ENCODE measurements at regions of chr13 and their contacts with region 1.

Region 1: GRCh38 chr13:41652727-41653361 is 195.5 kb downstream of the RGCC start:
- DNase-seq: peak in 1 of 2 donors; percentile 43
- H3K4me3 ChIP-seq: no peak overlapping the region
- H3K27ac ChIP-seq: peak overlapping the region in 1 of 2 donors; percentile 29
- H3K4me1 ChIP-seq: no peaks in the 10 kb centered on the region
- H3K27me3 ChIP-seq: no peaks in the 10 kb centered on the region
- CTCF ChIP-seq: peak; percentile 70 to 81 (median 74)
- POLR2A ChIP-seq: no peak

Region 2: DNA sequence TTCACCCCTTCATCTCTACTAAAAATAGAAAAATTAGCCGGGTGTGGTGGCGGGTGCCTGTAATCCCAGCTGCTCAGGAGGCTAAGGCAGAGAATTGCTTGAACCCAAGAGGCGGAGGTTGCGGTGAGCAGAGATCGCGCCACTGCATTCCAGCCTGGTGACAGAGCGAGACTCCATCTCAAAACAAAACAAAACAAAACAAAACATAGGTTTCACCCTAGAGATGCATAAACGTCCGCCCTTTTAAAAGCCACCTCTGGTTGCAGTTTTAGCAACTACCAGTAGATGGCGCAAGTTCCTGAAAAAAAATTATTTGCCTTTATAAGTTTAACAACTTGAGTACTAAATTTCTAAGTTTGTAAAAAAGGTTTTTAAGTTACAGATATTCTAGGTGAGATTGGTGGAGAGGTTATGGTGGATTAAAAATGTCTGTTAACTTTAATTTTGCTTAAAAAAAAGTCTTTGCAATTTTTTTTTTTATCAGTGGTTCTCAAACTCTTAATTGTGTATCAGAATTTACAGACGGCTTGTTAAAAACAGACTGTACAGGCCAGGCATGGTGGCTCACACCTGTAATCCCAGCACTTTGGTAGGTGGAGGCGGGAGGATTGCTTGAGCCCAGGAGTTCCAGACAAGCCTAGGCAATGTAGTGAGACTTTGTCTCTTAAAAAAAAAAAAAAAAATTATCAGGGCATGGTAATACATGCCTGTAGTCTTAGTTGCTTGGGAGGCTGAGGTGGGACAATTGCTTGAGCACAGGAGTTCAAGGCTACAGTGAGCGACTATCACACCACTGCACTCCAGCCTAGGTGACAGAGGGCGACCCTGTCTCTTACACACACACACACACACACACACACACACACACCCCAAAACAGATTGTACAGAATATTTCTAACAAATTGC is 299.7 kb before region 1 on chr13:
- intact Hi-C with region 1: loop called (anchors 10 kb)
- DNase-seq: no peak
- H3K4me3 ChIP-seq: no peak overlapping the region
- H3K27ac ChIP-seq: no peak overlapping the region
- H3K4me1 ChIP-seq: no peaks in the 10 kb centered on the region
- H3K27me3 ChIP-seq: no peaks in the 10 kb centered on the region
- CTCF ChIP-seq: peak; percentile 54 to 84 (median 67)
- POLR2A ChIP-seq: no peak

Region 3: DNA sequence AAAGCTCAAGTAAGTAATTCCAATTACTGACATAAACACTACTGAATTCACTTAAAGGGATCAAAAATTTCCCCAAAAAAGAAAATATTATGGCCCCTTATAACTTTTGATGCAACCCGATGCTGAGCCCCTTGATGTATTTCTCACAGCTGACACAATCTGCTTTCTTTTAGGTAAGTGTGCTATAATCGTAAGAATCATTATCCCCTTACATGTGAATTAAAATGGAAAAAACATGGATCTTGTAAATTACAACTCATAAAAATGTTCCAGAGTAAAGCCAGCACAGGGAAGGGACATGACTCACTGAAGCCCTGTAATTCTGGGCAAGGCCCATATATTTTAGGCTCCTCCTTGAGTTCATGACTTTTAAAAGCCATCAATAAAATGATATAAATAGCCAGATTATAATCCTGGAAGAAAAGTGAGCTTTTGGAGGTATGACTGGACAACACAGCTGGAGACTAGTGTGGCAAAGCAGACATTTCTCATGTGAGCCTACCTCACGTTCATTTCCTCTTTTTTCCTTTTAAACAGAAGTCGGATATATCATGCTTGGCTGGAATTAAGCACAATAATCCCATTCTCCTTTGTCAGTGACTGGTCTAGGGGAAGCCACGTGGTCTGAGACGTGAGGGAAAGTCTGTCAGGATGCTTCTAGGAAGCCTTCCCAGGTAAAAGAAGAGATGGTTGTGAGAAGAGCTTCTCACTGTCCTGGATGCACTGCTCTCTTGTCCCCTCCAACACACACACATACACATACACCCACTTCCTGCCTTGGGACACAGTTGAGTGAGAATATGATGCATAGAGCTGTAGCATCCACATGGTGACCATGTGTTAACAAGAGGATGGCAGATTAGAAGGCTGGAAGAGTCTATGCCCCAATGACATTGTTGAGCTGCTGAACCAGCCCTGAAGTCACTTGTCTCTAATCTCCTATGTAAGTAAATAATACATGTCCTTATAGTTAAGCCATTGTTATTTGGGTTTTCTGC is 30.1 kb before region 1 on chr13:
- intact Hi-C with region 1: no loop called
- DNase-seq: peak in 1 of 2 donors; percentile 64
- H3K4me3 ChIP-seq: no peak overlapping the region
- H3K27ac ChIP-seq: peak overlapping the region; percentile 83
- H3K4me1 ChIP-seq: peaks cover 0 to 4% of the 10 kb centered on the region in 2 donors
- H3K27me3 ChIP-seq: no peaks in the 10 kb centered on the region
- CTCF ChIP-seq: no peak
- POLR2A ChIP-seq: no peak

Region 4: DNA sequence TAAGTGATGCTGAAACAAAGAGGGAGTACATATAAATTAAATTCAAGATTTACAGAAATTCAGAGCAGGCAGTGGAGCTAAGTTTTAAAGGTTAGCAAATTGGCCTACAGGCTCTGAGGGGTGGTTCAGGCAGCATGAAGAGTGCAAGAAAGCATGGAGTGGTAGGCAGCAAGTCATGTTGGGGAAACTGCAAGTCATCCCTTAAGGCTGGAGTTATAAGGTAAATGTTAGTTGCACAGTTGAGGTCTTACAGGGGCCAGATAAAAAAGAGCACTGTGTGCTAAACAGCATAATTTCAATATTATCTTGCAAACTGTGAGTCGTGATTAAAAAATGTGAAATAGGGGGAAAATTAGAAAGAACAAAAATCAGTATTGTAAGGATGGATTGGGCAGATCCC is 201.9 kb after region 1 on chr13:
- intact Hi-C with region 1: no loop called
- DNase-seq: no peak
- H3K4me3 ChIP-seq: no peak overlapping the region
- H3K27ac ChIP-seq: no peak overlapping the region
- H3K4me1 ChIP-seq: peaks cover 0 to 4% of the 10 kb centered on the region in 2 donors
- H3K27me3 ChIP-seq: no peaks in the 10 kb centered on the region
- CTCF ChIP-seq: no peak
- POLR2A ChIP-seq: no peak

Measured in uterus (tissue), 4 donors.